Left cardiac atrium (tissue), 4 donors: ENCODE measurements at regions of chr2 and their contacts with region 1.

Region 1: DNA sequence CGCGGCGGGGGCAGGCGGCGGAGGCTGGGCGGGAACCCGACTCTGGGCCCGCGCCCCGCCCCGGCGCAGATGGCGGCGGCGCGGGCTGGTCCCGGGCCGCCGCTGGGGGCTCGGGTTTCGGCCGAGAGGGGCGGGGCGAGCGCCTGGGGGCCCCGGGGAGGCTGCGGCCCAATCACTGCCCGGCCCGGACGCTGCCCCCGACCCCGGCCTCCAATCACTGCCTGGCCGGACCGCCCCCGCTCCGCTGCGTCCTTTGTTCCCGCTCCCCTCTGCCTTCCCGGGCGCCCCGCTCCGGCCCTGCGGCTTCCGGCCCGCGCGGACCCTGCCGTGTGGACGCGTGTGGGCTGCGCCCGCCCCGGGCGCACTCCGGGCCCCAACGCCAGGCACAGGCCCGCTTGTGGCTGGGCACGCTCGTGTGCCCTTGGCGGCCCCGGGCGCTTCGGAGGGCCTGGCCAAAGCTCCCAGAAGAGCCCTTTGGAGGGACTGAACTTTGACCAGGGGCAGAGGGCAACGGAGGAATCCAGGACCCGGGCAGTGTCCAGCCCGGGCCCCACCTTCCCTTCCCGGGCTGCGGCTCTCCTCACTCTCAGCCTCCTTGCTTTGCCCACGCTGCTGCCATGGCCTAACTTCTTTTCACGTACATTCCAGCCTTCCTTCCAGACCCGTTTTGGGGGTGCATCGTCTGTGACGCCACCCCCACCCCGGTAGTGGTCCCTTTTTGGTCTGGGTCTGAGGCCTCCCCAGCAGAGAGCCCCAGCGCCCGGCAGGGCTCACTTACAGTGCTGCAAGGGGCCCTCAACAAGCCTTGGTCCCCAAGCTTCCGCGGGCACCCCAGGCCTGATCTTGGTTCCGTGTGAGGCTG is 27.1 kb upstream of the PTMA start:
- DNase-seq: peak; percentile 91
- ATAC-seq: peak; percentile 93

Region 2: DNA sequence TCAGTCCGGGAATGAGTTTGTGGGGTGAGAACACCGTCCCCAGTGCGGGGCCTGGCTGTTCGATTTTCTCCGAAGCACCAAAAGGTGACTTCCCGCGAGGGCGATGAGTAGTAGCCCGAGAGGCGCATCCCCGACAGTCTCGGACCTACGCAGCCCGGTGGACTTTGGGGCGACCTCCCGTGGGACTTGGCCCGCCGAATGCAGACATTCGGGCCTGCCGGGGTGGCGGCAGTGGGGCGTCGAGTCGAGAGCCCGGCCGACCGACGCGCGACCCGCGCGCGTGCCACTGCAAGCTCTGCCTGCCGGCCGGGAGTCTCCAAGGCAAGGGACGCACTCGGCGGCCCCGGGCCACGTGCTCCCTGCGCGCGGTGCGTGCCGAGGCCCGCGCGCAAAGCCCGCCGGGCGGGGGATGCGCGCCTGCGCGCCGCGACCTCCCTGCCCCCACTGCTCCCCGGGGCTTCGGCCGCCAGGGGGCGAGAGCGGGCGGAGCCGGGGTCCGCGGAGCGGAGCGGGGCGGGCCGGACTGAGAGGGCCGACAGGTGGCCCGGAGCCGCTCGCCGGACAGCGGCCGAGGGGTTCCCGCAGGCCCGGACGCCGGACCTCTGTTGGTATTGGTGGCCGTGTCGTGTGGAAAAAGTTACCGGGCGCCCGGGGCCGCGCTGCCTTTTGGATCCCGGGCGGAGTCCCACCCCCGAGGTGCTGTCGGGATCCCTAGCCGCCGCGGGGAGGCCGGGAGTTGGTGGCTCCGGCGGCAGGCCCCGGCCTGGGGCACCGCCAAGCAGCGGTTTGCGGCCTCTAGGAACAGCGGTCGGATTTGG is 29.0 kb after region 1 on chr2:
- intact Hi-C with region 1: loop called (anchors 2 kb)
- DNase-seq: peak; percentile 82
- ATAC-seq: peak; percentile 22 to 38

Region 3: DNA sequence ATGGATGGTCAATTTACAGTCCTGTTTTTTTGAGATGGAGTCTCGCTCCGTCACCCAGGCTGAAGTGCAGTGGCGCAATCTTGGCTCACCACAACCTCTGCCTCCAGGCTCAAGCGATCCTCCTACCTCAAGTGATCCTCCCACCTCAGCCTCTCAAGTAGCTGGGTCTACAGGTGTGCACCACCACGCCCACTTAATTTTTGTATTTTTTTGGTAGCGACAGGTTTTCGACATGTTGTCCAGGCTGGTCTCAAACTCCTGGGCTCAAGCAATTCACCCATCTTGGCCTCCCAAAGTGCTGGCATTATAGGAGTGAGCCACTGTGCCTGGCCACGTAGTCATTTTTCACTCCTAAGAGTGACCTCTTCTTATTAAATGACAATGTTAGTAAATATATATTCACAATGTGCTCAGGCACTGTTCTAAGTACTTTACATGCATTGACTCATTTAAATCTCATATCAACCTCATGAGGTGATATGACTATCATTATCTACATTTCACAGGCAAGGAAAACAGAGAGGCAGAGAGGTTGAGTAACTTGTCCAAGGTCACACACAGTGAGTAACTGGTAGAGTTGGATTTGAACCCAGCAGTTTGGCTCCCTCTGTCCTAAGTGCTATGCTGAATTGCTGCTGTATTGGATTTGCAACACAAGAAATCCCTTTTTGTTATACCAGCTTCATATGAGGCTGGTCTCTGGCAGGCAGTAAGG is 274.7 kb after region 1 on chr2:
- intact Hi-C with region 1: no loop called
- DNase-seq: no peak
- ATAC-seq: no peak